ENCODE measurements at regions of chr4 and their contacts with region 1.

Region 1: GRCh38 chr4:89294573-89295269 is 12.9 kb downstream of the GPRIN3 start:
- DNase-seq: no peak
- ATAC-seq: peak; percentile 66
- H3K4me3 Mint-ChIP-seq: peak overlapping the region; percentile 53
- H3K27ac Mint-ChIP-seq: peak overlapping the region; percentile 94
- H3K4me1 Mint-ChIP-seq: peaks cover 83% of the 10 kb centered on the region
- H3K27me3 Mint-ChIP-seq: no peaks in the 10 kb centered on the region

Region 2: DNA sequence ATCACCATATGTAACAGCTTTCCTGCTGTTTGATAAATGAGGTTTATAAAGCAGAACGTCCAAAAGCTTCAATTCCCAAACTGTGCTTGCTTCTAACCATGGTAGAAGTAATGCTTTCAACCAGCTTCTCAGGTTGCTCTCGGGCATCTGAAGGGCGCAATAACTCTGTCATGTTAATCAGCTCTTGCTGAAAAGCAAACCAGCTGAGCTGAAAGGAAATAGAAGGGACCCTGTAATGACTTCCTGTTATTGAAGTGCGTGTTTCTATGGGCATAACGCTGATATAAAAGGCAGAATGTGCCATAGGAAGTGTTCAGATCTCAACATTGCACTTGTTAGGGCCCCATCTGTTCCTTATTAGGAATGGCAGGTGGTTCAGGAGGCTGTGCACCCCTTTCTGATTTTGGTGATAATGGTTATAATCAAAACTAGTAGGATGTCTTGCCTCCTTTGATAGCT is 681.3 kb before region 1 on chr4:
- CTCF ChIA-PET with region 1: no interaction called
- POLR2A ChIA-PET with region 1: no interaction called
- intact Hi-C with region 1: loop called in 1 of 2 experiments (anchors 10 kb)
- DNase-seq: peak; percentile 43
- ATAC-seq: peak; percentile 75
- H3K4me3 Mint-ChIP-seq: peak overlapping the region; percentile 59
- H3K27ac Mint-ChIP-seq: peak overlapping the region; percentile 90
- H3K4me1 Mint-ChIP-seq: peaks cover 78% of the 10 kb centered on the region
- H3K27me3 Mint-ChIP-seq: no peaks in the 10 kb centered on the region

Region 3: GRCh38 chr4:89110986-89111832 is 183.5 kb before region 1 on chr4 and contains the start of gene TIGD2:
- CTCF ChIA-PET with region 1: no interaction called
- POLR2A ChIA-PET with region 1: no interaction called
- intact Hi-C with region 1: loop called in 1 of 2 experiments (anchors 5 kb)
- DNase-seq: peak; percentile 93
- ATAC-seq: peak; percentile 95
- H3K4me3 Mint-ChIP-seq: peak within 1 kb of the TSS; percentile 73
- H3K27ac Mint-ChIP-seq: peak within 1 kb of the TSS; percentile 86
- H3K4me1 Mint-ChIP-seq: peaks cover 18% of the 10 kb centered on the region
- H3K27me3 Mint-ChIP-seq: peaks cover 16% of the 10 kb centered on the region
- total RNA-seq, gene TIGD2: 2.1 to 2.3 TPM

Region 4: GRCh38 chr4:89254847-89255246 is 39.9 kb before region 1 on chr4:
- CTCF ChIA-PET with region 1: interaction called, 13 read pairs
- POLR2A ChIA-PET with region 1: interaction called, 4 read pairs
- intact Hi-C with region 1: loop called (anchors 2 to 5 kb)
- DNase-seq: peak; percentile 64
- ATAC-seq: peak; percentile 72
- H3K4me3 Mint-ChIP-seq: no peak overlapping the region
- H3K27ac Mint-ChIP-seq: peak overlapping the region; percentile 44
- H3K4me1 Mint-ChIP-seq: peaks cover 71% of the 10 kb centered on the region
- H3K27me3 Mint-ChIP-seq: no peaks in the 10 kb centered on the region

Region 5: GRCh38 chr4:89307446-89308160 is 12.9 kb after region 1 on chr4 and contains the start of gene GPRIN3:
- CTCF ChIA-PET with region 1: interaction called, 17 read pairs
- POLR2A ChIA-PET with region 1: interaction called, 11 read pairs
- intact Hi-C with region 1: loop called in 1 of 2 experiments (anchors 1 kb)
- DNase-seq: peak; percentile 84
- ATAC-seq: peak; percentile 70
- H3K4me3 Mint-ChIP-seq: peak within 1 kb of the TSS; percentile 77
- H3K27ac Mint-ChIP-seq: peak within 1 kb of the TSS; percentile 93
- H3K4me1 Mint-ChIP-seq: peaks cover 59% of the 10 kb centered on the region
- H3K27me3 Mint-ChIP-seq: no peaks in the 10 kb centered on the region
- total RNA-seq, gene GPRIN3: 10.5 to 12.2 TPM

Region 6: DNA sequence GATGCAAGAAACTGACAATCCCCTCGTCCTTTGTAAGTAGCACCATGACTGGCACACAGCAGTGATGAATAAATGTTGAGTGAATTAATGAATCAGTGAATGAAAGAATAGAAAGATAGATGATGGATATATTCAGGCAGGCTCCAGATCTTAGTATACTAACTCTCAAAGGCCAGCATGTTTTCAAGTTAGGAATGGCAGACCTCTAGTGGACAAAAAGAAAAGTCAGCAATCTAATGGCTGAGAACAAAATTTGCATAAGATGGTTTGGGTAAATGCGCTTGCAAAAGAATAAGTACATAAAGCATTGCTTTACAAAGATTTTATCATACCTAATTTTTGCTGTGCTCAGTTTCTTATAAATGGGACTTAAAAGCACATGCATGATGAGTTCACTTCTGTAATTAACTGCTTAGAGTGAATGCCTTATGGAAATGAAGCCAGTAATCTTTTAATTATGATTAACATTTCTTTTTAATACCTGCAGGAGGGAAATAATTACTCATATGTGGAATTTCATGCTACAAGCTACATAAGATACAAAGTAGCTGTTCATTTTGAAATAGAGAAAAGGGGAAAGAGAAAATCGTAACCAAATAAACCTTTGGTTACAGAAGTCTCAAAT is 139.8 kb after region 1 on chr4:
- CTCF ChIA-PET with region 1: interaction called, 4 read pairs
- POLR2A ChIA-PET with region 1: no interaction called
- intact Hi-C with region 1: loop called in 1 of 2 experiments (anchors 5 kb)
- DNase-seq: no peak
- ATAC-seq: peak; percentile 75
- H3K4me3 Mint-ChIP-seq: no peak overlapping the region
- H3K27ac Mint-ChIP-seq: no peak overlapping the region
- H3K4me1 Mint-ChIP-seq: peaks cover 21% of the 10 kb centered on the region
- H3K27me3 Mint-ChIP-seq: peaks cover 2% of the 10 kb centered on the region

Region 7: GRCh38 chr4:90181644-90182043 is 886.9 kb after region 1 on chr4:
- CTCF ChIA-PET with region 1: no interaction called
- POLR2A ChIA-PET with region 1: no interaction called
- intact Hi-C with region 1: no loop called
- DNase-seq: no peak
- ATAC-seq: no peak
- H3K4me3 Mint-ChIP-seq: no peak overlapping the region
- H3K27ac Mint-ChIP-seq: no peak overlapping the region
- H3K4me1 Mint-ChIP-seq: no peaks in the 10 kb centered on the region
- H3K27me3 Mint-ChIP-seq: no peaks in the 10 kb centered on the region